Activated CD8-positive, alpha-beta memory T cell treated with anti-CD3 and anti-CD28 coated beads, Interleukin-2, amount 10 ng/mL, durations not matched to agents 7 days and 5 days (primary cell): ENCODE measurements at regions of chr17 and their contacts with region 1.

Region 1: DNA sequence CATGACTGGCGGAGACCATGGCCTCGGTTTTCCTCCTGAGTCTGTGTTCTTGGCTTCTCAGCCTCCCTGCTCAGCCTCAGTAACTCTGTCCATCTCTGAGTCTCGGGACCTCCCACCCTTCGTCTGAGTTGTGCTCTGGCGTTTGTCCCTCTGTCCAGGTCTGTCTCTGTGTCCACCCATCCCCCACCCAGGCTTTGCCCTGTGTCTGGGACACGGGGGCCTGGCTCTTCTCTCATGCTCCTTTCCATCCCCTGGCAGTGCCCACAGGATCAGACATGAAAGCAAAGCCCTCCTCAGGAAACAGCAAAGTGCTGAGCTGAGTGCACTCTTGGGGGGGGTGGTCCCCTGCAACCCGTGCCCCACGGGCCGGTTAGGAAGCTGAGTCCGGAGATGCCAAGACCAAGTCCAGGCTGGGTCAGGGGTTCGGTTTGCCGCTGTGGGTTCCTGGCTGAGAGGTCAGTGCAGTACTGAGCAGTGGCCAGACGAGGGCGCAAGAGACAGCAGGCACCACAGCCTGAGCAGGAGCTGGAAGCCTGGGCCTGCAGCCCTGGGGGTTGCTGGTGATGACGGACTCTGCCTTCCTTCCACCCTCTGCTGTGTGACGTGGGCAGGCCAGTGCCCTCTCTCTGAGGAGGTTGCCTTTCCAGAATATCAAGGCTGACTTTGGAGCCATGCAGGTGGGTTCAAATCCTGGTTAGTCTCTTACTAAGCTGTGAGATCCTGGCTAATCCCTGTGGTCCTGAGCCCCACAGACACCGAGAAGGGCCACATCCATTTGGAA is 2.5 kb downstream of the P2RX1 start:
- DNase-seq: peak; percentile 89
- ATAC-seq: peak; percentile 79
- H3K4me3 Mint-ChIP-seq: no peak overlapping the region
- H3K27ac Mint-ChIP-seq: peak overlapping the region; percentile 9
- H3K4me1 Mint-ChIP-seq: peaks cover 37% of the 10 kb centered on the region
- H3K27me3 Mint-ChIP-seq: peaks cover 9% of the 10 kb centered on the region

Region 2: DNA sequence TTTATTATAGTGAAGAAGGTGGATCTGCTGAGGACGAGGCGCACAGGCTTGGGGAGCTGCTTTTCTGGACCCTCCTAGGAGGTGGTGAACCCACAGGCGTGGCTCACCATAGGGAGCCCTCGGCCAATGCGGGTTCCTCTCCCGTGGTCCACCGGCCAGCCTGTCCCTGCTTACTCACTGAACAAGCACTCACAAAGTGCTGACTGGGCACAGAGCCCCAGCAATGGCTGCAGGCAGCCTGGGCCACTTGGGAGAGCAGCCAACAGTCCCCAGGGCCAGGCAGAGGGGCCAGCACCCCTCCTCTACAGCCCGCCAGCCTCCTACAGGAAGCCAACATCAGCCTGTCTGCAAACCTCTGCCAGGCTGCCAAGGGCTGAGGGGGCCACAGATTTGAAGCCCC is 48.5 kb before region 1 on chr17:
- CTCF ChIA-PET with region 1: interaction called, 18 read pairs
- DNase-seq: no peak
- ATAC-seq: no peak
- H3K4me3 Mint-ChIP-seq: no peak overlapping the region
- H3K27ac Mint-ChIP-seq: no peak overlapping the region
- H3K4me1 Mint-ChIP-seq: no peaks in the 10 kb centered on the region
- H3K27me3 Mint-ChIP-seq: no peaks in the 10 kb centered on the region

Region 3: DNA sequence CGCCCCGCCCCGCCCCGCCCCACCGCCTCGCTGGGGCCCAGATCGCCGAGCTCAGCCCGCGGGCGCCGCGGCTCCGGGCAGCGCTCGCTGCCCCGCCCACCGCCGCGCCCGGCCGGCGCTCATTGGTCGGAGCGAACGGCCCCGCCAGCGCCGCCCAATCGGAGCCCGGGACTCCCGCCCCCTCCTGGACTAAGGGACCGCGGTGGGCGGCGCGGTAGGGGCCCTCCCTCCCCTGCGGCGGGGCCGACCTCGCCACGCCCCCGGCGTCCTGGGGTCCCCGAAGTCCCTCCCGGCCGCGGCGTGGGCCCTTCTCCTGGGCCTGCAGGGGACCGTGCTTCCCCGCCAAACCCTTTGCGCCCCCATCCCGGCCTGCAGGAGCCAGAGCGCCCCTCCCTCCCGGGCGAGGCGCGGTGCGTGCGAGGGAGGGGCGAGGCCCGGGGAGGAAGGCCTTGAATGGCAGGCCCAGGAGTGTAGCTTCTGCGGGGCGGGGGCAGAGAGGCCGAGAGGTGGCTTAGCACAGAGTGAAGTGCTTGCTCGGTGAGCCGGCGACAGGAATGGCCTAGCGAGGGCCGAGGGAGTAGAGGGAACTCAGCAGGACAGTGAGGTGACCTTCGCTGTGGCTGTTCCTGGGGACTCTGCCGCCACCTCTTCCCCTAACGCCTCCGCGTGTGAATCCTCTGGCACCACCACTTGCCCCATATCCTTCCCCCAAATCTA is 20.6 kb before region 1 on chr17 and contains the start of gene CAMKK1:
- CTCF ChIA-PET with region 1: interaction called, 26 read pairs
- DNase-seq: peak; percentile 91
- ATAC-seq: peak; percentile 92
- H3K4me3 Mint-ChIP-seq: peak within 1 kb of the TSS; percentile 73
- H3K27ac Mint-ChIP-seq: peak within 1 kb of the TSS; percentile 68
- H3K4me1 Mint-ChIP-seq: peaks cover 23% of the 10 kb centered on the region
- H3K27me3 Mint-ChIP-seq: peaks cover 7% of the 10 kb centered on the region
- total RNA-seq, gene CAMKK1: 1.8 TPM

Region 4: DNA sequence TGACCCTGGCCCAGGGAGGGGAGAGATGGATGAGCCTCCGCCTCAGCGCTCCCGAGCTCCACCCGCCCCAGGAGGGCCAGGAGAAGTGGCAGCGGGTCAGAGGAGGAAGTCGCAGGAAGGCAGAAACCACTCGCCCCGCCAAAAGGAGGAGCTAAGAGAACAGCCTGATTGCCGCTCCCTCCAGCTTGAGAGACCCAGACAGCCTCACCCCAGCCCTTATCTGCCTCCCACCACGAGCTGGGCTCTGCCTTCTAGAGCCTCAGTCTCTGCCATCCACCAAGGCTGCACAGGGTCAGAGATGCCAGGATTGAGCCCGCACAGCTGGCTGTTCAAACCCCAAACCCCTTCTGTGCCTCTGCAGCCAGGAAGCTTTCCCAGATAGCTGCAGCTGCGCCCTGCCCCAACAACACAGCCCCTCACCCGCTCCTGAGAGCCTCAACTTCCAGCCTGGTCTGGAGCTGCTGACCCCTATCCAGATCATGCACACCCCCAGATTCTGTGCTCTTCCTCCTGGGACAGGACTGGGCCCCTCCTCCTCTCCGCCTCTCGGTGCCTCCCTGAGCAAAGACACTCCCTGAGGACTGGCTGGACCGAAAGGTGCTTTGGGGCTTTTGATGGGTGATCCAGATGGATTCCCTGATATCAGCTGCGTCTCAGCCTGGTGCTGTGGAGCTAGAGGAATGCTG is 51.5 kb after region 1 on chr17:
- CTCF ChIA-PET with region 1: interaction called, 26 read pairs
- DNase-seq: peak; percentile 89
- ATAC-seq: peak; percentile 70
- H3K4me3 Mint-ChIP-seq: peak overlapping the region; percentile 80
- H3K27ac Mint-ChIP-seq: peak overlapping the region; percentile 93
- H3K4me1 Mint-ChIP-seq: peaks cover 37% of the 10 kb centered on the region
- H3K27me3 Mint-ChIP-seq: peaks cover 3% of the 10 kb centered on the region

Region 5: DNA sequence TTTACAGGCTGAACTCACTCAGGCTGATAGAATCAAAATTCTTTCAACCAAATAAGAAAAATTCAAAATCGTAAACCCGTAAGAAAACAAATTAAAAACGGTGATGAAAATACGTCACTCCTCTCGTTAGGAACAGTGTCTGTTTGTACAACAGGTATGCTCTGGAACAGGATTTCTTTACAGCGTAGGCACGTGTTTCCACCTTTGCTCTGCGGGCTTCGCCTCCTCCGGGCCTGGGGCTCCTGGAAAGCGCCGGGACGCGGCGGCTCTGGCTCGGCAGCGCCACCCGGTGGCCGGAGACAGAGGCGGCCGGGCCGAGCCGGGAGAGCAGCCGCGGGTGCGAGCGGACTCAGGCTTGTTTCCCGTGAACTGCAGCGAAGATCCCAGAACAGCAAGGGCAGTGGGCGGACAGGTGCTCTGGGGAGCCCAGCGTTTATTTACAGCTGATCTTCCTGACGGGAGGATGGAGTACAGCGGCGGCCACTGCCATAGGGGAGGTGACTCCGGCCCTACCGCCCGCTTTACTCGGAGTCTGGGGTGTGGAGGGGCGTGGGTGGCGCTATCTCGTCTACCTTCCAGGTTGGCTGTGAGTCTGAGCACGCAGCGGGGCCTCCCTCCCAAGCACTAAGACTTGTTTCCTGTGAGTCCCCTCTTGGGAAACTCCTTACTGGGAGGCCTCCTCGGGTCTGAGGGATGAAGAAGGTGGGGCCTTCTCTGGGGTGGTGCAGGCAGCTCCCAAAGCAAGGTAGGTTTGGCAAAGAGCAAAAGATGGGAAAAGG is 91.0 kb after region 1 on chr17:
- CTCF ChIA-PET with region 1: interaction called, 125 read pairs
- DNase-seq: peak; percentile 54
- ATAC-seq: peak; percentile 77
- H3K4me3 Mint-ChIP-seq: no peak overlapping the region
- H3K27ac Mint-ChIP-seq: no peak overlapping the region
- H3K4me1 Mint-ChIP-seq: peaks cover 4% of the 10 kb centered on the region
- H3K27me3 Mint-ChIP-seq: no peaks in the 10 kb centered on the region

Region 6: GRCh38 chr17:4074831-4075495 is 161.2 kb after region 1 on chr17:
- CTCF ChIA-PET with region 1: interaction called, 28 read pairs
- DNase-seq: no peak
- ATAC-seq: peak; percentile 71
- H3K4me3 Mint-ChIP-seq: no peak overlapping the region
- H3K27ac Mint-ChIP-seq: no peak overlapping the region
- H3K4me1 Mint-ChIP-seq: peaks cover 3% of the 10 kb centered on the region
- H3K27me3 Mint-ChIP-seq: no peaks in the 10 kb centered on the region